Uterus (tissue), 4 donors: ENCODE measurements at regions of chr10 and their contacts with region 1.

Region 1: DNA sequence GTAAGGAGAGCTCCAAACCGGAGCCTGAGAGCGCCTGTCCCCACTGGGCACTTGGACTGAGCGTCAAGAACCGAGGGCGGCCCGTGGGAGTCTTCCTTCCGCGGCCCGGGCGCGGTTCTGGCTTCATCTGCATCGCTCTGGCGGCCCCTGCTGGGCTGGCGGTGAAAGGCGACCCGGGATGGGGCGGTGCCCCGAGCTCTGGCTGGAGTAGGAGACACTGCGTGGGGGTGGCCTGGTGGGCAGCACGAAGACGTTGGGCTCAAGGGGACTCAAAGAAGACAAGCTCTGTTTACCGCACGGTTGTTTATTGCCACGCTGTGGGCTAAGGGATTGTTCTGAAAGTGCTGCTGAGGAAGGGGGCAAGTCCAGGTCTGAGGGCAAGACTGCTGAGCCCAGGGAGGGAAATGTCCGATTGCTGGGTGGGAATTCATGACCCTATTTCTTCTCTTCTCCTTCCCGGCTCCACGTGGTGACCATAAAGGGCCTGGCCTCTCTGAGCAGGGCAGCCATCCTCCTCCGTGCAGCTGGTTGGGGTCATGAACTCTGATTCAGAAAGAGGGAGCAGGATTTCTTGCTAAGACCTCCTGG is 29.8 kb downstream of the PLAU start:
- DNase-seq: peak; percentile 83 to 91
- H3K4me3 ChIP-seq: no peak overlapping the region
- H3K27ac ChIP-seq: peak overlapping the region; percentile 73 to 78
- H3K4me1 ChIP-seq: peaks cover 0 to 5% of the 10 kb centered on the region in 2 donors
- H3K27me3 ChIP-seq: no peaks in the 10 kb centered on the region
- CTCF ChIP-seq: peak; percentile 95 to 96 (median 96)
- POLR2A ChIP-seq: no peak

Region 2: DNA sequence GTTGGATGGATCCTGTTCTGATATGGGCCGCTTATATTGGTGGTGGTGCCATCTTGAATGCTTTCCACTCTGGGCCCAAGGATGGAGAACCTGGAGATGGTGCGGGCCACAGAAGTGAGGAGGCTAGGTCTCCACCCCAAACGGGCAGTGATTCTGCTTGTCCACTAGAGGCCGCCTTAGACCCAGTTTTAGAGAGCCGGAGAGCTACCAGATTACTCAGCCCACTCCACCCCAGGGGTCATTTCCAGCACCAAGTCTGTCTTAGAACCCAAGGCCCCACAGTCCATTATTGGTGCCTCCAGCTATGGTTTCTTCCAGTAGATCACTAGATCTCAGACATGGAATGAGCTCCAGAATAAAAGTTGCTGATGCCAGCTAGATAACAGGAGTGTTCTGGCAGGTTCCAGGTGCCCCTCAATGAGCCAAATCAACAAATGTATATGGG is 54.6 kb before region 1 on chr10:
- intact Hi-C with region 1: loop called (anchors 2 kb)
- DNase-seq: peak; percentile 79 to 80
- H3K4me3 ChIP-seq: no peak overlapping the region
- H3K27ac ChIP-seq: peak overlapping the region; percentile 82 to 86
- H3K4me1 ChIP-seq: peaks cover 11 to 20% of the 10 kb centered on the region in 2 donors
- H3K27me3 ChIP-seq: no peaks in the 10 kb centered on the region
- CTCF ChIP-seq: peak; percentile 84 to 93 (median 89)
- POLR2A ChIP-seq: no peak